ENCODE measurements at regions of chr3 and their contacts with region 1.

Region 1: DNA sequence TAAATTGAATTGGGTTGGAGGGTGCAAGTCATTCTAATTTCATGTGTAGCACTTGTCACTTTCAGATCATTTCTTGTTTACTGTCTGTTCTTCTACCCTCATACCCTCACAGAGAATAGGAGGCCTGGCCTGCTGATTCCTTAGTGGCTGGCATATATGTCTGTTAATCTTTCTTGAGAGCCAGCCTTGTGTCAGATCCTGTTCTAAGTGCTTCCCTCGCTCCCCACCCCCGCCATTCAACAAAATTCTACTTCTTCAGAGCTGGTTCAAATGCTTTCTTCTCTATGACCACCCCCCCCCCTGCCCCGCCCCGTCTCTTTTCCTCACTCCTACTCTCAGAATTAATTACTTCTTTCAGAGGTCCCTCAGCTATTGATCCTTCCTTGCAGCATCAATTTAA is 1.5 kb upstream of the U2SURP start:
- DNase-seq: no peak
- H3K4me3 ChIP-seq: peak overlapping the region in 1 of 4 donors; percentile 95
- H3K27ac ChIP-seq: peak overlapping the region in 1 of 4 donors; percentile 91
- H3K4me1 ChIP-seq: peaks cover 8 to 45% (median 12%) of the 10 kb centered on the region in 3 donors
- H3K27me3 ChIP-seq: no peaks in the 10 kb centered on the region
- CTCF ChIP-seq: no peak
- POLR2A ChIP-seq: no peak

Region 2: GRCh38 chr3:142580061-142580423 is 419.8 kb before region 1 on chr3:
- intact Hi-C with region 1: loop called (anchors 5 kb)
- DNase-seq: no peak
- H3K4me3 ChIP-seq: no peak overlapping the region
- H3K27ac ChIP-seq: no peak overlapping the region
- H3K4me1 ChIP-seq: peaks cover 4 to 40% (median 19%) of the 10 kb centered on the region in 3 donors
- H3K27me3 ChIP-seq: peaks cover 0 to 19% (median 0%) of the 10 kb centered on the region in 4 donors
- CTCF ChIP-seq: no peak
- POLR2A ChIP-seq: no peak

Region 3: GRCh38 chr3:142888481-142889211 is 111.2 kb before region 1 on chr3 and contains the start of gene PCOLCE2:
- intact Hi-C with region 1: no loop called
- DNase-seq: no peak
- H3K4me3 ChIP-seq: peak within 1 kb of the TSS; percentile 36 to 68 (median 55)
- H3K27ac ChIP-seq: peak within 1 kb of the TSS in 3 of 4 donors; percentile 27 to 34 (median 32)
- H3K4me1 ChIP-seq: peaks cover 5 to 24% (median 10%) of the 10 kb centered on the region in 3 donors
- H3K27me3 ChIP-seq: peaks cover 0 to 55% (median 0%) of the 10 kb centered on the region in 4 donors
- CTCF ChIP-seq: no peak
- POLR2A ChIP-seq: no peak
- total RNA-seq, gene PCOLCE2: 0.38 to 19.1 (median 6.4) TPM

Region 4: GRCh38 chr3:143389388-143389787 is 389.5 kb after region 1 on chr3:
- intact Hi-C with region 1: no loop called
- DNase-seq: no peak
- H3K4me3 ChIP-seq: no peak overlapping the region
- H3K27ac ChIP-seq: no peak overlapping the region
- H3K4me1 ChIP-seq: no peaks in the 10 kb centered on the region
- H3K27me3 ChIP-seq: no peaks in the 10 kb centered on the region
- CTCF ChIP-seq: no peak
- POLR2A ChIP-seq: no peak

Region 5: GRCh38 chr3:144409319-144409718 is 1409.4 kb after region 1 on chr3:
- intact Hi-C with region 1: no loop called
- DNase-seq: no peak
- H3K4me3 ChIP-seq: no peak overlapping the region
- H3K27ac ChIP-seq: no peak overlapping the region
- H3K4me1 ChIP-seq: no peaks in the 10 kb centered on the region
- H3K27me3 ChIP-seq: no peaks in the 10 kb centered on the region
- CTCF ChIP-seq: no peak
- POLR2A ChIP-seq: no peak